Colonic mucosa (tissue), 4 donors: ENCODE measurements at regions of chr1 and their contacts with region 1.

Region 1: GRCh38 chr1:183655562-183656075 is 2.5 kb upstream of the APOBEC4 start:
- DNase-seq: peak; percentile 82
- H3K4me3 ChIP-seq: no peak overlapping the region
- H3K27ac ChIP-seq: no peak overlapping the region
- H3K4me1 ChIP-seq: peaks cover 13% of the 10 kb centered on the region
- H3K27me3 ChIP-seq: no peaks in the 10 kb centered on the region
- CTCF ChIP-seq: peak; percentile 75

Region 2: GRCh38 chr1:182990413-182991144 is 665.0 kb before region 1 on chr1:
- intact Hi-C with region 1: no loop called
- DNase-seq: no peak
- H3K4me3 ChIP-seq: no peak overlapping the region
- H3K27ac ChIP-seq: no peak overlapping the region
- H3K4me1 ChIP-seq: no peaks in the 10 kb centered on the region
- H3K27me3 ChIP-seq: no peaks in the 10 kb centered on the region
- CTCF ChIP-seq: no peak

Region 3: GRCh38 chr1:183471743-183472487 is 183.7 kb before region 1 on chr1:
- intact Hi-C with region 1: no loop called
- DNase-seq: peak; percentile 99
- H3K4me3 ChIP-seq: peak overlapping the region; percentile 96
- H3K27ac ChIP-seq: peak overlapping the region; percentile 95
- H3K4me1 ChIP-seq: peaks cover 5% of the 10 kb centered on the region
- H3K27me3 ChIP-seq: no peaks in the 10 kb centered on the region
- CTCF ChIP-seq: no peak

Region 4: DNA sequence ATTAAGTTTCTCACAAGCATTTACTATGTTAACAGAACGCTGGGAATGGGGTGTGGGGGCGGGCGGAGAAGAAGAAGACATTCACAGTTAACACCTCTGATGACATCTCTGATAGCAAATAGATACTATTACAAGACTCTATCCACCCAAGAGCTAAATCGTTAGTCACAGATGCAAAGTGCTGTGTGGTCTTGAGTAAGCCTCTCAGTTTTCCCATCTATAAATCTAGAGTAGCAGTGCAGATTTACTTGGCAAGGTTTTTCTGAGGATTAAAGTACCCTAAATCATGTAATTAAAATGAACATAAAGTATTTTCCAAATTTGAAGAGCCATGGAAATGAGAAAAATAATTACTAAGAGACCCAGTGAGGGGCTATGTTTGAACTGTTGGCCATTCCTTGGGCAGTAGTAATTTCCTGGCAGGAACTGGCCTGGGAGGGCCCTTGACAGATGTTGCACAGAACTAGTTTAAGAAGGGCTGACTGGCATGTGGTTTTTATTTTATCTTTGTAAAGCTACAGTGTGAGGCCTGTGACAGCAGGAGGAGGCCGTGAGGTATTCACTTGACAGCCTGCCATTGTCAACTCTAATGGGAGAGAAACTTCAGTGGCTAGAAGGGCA is 56.2 kb after region 1 on chr1:
- intact Hi-C with region 1: no loop called
- DNase-seq: no peak
- H3K4me3 ChIP-seq: no peak overlapping the region
- H3K27ac ChIP-seq: no peak overlapping the region
- H3K4me1 ChIP-seq: no peaks in the 10 kb centered on the region
- H3K27me3 ChIP-seq: no peaks in the 10 kb centered on the region
- CTCF ChIP-seq: no peak

Region 5: GRCh38 chr1:183915625-183916510 is 260.2 kb after region 1 on chr1:
- intact Hi-C with region 1: loop called (anchors 2 kb)
- DNase-seq: peak; percentile 72
- H3K4me3 ChIP-seq: no peak overlapping the region
- H3K27ac ChIP-seq: no peak overlapping the region
- H3K4me1 ChIP-seq: no peaks in the 10 kb centered on the region
- H3K27me3 ChIP-seq: no peaks in the 10 kb centered on the region
- CTCF ChIP-seq: peak; percentile 82